Left colon (tissue), 2 donors: ENCODE measurements at regions of chr18 and their contacts with region 1.

Region 1: GRCh38 chr18:5600378-5601071 is 56.7 kb upstream of the EPB41L3 start:
- DNase-seq: no peak
- ATAC-seq: peak; percentile 27

Region 2: GRCh38 chr18:5410582-5410981 is 189.9 kb before region 1 on chr18:
- intact Hi-C with region 1: no loop called
- DNase-seq: no peak
- ATAC-seq: no peak

Region 3: GRCh38 chr18:5841518-5841917 is 241.0 kb after region 1 on chr18:
- intact Hi-C with region 1: loop called in 1 of 2 experiments (anchors 10 kb)
- DNase-seq: no peak
- ATAC-seq: no peak

Region 4: DNA sequence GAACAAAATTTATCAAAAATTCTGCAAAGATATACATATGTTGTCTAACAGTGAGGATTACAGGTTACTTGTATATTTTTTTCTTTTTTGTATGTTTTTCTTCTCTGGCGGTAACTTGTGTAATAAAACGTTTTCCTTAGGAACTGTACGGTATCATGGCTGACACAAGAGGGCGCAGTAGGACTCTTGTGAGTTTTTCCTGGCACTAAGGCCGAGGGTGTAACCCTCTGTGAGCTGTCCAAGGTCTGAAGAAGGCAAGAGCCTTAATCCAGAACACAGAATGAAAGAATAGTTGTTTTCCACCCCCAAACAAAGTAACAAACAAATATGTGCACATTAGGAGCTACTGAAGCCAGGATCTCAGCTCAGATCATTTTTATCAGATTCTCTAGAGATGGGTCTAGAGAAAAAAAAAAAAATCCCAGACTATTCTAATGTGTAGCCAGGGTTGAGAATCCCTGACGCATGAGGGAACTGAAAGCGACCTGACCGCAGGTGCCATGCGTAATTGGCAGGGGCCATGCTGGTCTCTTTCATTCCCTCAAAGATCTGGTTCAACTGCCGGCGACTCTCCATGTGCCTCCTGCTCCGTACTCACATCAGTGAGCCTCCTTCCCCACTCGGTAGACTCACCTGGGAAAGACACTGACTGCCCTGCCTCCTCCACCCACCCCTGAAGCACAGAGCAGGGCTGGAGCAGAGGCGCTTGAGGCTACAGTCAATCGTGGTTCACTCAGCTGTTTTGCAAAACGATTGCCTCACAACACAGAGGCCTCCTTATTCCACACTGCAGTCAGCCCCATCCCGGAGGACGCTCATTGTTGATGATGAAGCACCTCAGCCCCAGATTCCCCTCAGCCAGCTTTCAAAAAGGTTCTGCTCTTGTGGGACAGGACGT is 267.9 kb after region 1 on chr18:
- intact Hi-C with region 1: loop called in 1 of 2 experiments (anchors 10 kb)
- DNase-seq: peak; percentile 43 to 73
- ATAC-seq: peak; percentile 93